Natural killer cell (primary cell): ENCODE measurements at regions of chr1 and their contacts with region 1.

Region 1: GRCh38 chr1:8152731-8153702 is 126.9 kb upstream of the ERRFI1 start:
- DNase-seq: peak; percentile 48 to 90
- ATAC-seq: peak; percentile 84 to 89 (median 87)
- H3K4me3 ChIP-seq: peak overlapping the region; percentile 9
- H3K4me3 Mint-ChIP-seq: peak overlapping the region; percentile 72
- H3K27ac ChIP-seq: peak overlapping the region; percentile 95
- H3K27ac Mint-ChIP-seq: peak overlapping the region; percentile 91 to 94
- H3K4me1 ChIP-seq: peaks cover 31% of the 10 kb centered on the region
- H3K4me1 Mint-ChIP-seq: peaks cover 27 to 44% of the 10 kb centered on the region in 2 donors
- H3K27me3 ChIP-seq: peaks cover 9% of the 10 kb centered on the region
- H3K27me3 Mint-ChIP-seq: peaks cover 19% of the 10 kb centered on the region in 2 donors
- CTCF ChIP-seq: no peak

Region 2: DNA sequence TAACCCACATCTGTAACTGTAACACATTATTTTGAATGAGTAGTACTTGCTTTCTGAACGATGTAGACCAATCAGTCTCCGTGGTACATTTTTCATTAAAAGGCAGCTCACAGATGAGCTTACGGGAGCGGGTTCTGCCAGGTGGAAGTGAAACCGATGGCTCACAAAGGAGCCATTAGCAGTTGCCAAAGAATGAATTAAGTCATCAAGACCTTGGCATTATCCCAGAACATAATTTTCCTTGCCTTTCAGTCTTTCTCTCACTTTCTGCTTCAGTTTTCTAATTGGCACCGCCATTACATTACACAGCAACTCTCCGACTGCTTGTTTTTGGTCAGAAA is 266.6 kb before region 1 on chr1:
- intact Hi-C with region 1: no loop called
- DNase-seq: no peak
- ATAC-seq: no peak
- H3K4me3 ChIP-seq: no peak overlapping the region
- H3K4me3 Mint-ChIP-seq: no peak overlapping the region
- H3K27ac ChIP-seq: no peak overlapping the region
- H3K27ac Mint-ChIP-seq: no peak overlapping the region
- H3K4me1 ChIP-seq: peaks cover 3% of the 10 kb centered on the region
- H3K4me1 Mint-ChIP-seq: peaks cover 0 to 21% of the 10 kb centered on the region in 2 donors
- H3K27me3 ChIP-seq: no peaks in the 10 kb centered on the region
- H3K27me3 Mint-ChIP-seq: peaks cover 7 to 15% of the 10 kb centered on the region in 2 donors
- CTCF ChIP-seq: no peak

Region 3: GRCh38 chr1:7902478-7903085 is 250.4 kb before region 1 on chr1:
- intact Hi-C with region 1: no loop called
- DNase-seq: peak; percentile 43 to 86
- ATAC-seq: peak; percentile 51 to 75 (median 69)
- H3K4me3 ChIP-seq: peak overlapping the region; percentile 1
- H3K4me3 Mint-ChIP-seq: peak overlapping the region; percentile 82
- H3K27ac ChIP-seq: no peak overlapping the region
- H3K27ac Mint-ChIP-seq: peak overlapping the region; percentile 85
- H3K4me1 ChIP-seq: peaks cover 35% of the 10 kb centered on the region
- H3K4me1 Mint-ChIP-seq: peaks cover 48 to 60% of the 10 kb centered on the region in 2 donors
- H3K27me3 ChIP-seq: no peaks in the 10 kb centered on the region
- H3K27me3 Mint-ChIP-seq: no peaks in the 10 kb centered on the region
- CTCF ChIP-seq: peak; percentile 68

Region 4: GRCh38 chr1:8116893-8117264 is 36.1 kb before region 1 on chr1:
- intact Hi-C with region 1: loop called (anchors 2 kb)
- DNase-seq: no peak
- ATAC-seq: no peak
- H3K4me3 ChIP-seq: no peak overlapping the region
- H3K4me3 Mint-ChIP-seq: no peak overlapping the region
- H3K27ac ChIP-seq: no peak overlapping the region
- H3K27ac Mint-ChIP-seq: no peak overlapping the region
- H3K4me1 ChIP-seq: peaks cover 25% of the 10 kb centered on the region
- H3K4me1 Mint-ChIP-seq: peaks cover 29 to 44% of the 10 kb centered on the region in 2 donors
- H3K27me3 ChIP-seq: no peaks in the 10 kb centered on the region
- H3K27me3 Mint-ChIP-seq: peaks cover 10 to 21% of the 10 kb centered on the region in 2 donors
- CTCF ChIP-seq: no peak

Region 5: DNA sequence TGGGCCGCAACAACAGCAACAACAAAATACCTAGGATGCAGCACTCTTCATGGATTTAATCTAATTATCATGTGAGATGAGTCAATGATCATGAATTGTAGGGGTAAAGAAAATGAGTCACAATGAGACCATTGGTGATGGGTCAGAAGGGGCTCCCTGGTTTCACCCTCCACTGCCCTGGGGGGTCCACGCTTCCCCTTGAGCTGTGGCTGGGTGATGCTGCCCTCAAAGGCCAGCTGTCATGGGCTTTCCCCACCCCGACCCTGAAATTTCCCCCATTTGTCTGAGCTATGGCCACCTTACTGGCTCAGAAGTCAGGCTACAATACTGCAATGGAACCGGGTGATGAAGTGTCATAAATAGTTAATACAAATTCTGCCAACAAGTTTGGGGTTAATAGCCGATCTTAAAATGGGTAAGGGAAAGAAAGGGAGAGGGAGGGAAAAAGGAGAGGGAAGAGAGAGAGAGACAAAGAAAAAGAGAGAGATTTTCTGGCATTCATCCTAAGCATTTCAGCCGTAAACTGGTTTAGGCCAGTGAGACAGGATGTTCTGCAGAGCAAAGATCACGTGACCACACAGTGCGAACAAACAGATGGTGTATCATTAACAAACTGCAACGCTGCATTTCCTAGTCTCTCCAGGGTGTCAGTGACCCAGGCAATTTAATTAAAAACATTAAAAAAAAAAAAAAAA is 16.5 kb after region 1 on chr1:
- intact Hi-C with region 1: loop called (anchors 1 kb)
- DNase-seq: peak; percentile 39 to 86
- ATAC-seq: peak; percentile 87 to 98 (median 92)
- H3K4me3 ChIP-seq: no peak overlapping the region
- H3K4me3 Mint-ChIP-seq: peak overlapping the region; percentile 74
- H3K27ac ChIP-seq: peak overlapping the region; percentile 86
- H3K27ac Mint-ChIP-seq: peak overlapping the region; percentile 94 to 97
- H3K4me1 ChIP-seq: peaks cover 38% of the 10 kb centered on the region
- H3K4me1 Mint-ChIP-seq: peaks cover 22 to 35% of the 10 kb centered on the region in 2 donors
- H3K27me3 ChIP-seq: no peaks in the 10 kb centered on the region
- H3K27me3 Mint-ChIP-seq: no peaks in the 10 kb centered on the region
- CTCF ChIP-seq: no peak